ENCODE measurements at regions of chr3 and their contacts with region 1.

Region 1: DNA sequence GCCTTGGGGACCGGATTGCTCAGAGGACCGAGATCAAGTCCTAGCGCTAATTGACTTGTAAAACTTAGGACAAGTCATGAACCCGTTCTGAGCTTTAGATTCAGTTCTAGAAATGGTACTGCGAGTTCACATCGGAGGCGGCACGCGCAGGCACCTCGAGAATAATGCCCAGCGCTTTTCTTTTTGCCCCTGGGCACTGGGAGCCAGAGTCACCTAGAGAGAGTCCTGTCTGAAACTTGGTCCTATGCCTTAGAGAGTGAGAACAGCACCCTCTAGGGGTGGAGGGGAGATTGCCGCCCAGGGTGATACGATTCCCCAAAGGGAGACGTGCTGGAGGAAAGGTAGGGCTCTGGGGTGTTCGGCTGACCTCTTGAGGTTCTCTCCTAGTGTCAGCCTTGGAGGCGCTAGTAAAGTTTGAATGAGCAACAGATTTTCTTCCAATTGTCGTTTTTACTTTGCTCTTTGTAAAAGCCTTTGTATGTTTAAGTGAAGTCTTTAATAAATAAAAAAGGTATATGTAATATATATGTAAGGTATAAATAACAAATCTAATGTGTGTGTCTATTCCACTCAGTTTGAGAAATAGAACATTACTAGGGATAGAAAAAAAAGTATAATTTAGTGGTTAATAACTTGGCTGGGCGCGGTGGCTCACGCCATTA is 826 bp downstream of the EEF1AKMT4 start:
- DNase-seq: peak; percentile 92
- ATAC-seq: peak; percentile 65
- H3K4me3 ChIP-seq: peak overlapping the region; percentile 88 to 93 (median 91)
- H3K4me3 Mint-ChIP-seq: peak overlapping the region; percentile 87
- H3K27ac ChIP-seq: peak overlapping the region in 1 of 2 donors; percentile 58
- H3K27ac Mint-ChIP-seq: peak overlapping the region; percentile 78
- H3K4me1 ChIP-seq: peaks cover 5 to 17% of the 10 kb centered on the region in 2 donors
- H3K4me1 Mint-ChIP-seq: peaks cover 9% of the 10 kb centered on the region
- H3K27me3 ChIP-seq: no peaks in the 10 kb centered on the region
- H3K27me3 Mint-ChIP-seq: no peaks in the 10 kb centered on the region
- CTCF ChIP-seq: peak; percentile 94

Region 2: DNA sequence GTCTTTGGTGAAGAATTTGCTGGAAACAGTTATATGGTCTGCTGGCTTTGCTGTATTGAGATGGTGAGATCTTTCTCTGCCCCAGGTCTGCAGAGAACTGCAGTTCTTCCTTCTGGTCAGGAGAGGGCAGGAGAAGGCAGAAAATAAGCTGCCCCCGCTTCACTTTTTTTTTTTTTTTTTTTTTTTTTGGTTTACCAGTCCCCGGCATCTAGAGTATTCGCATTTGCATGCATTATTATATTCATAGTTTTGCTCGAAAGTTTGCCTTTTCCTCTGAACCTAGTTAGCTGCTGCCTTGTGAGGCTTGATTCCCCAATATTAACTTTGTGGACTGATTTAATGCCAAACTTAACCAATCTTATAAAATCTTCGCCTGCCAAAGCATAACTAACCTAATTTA is 355.0 kb before region 1 on chr3:
- CTCF ChIA-PET with region 1: interaction called, 10 read pairs
- POLR2A ChIA-PET with region 1: no interaction called
- intact Hi-C with region 1: loop called (anchors 1 kb)
- DNase-seq: peak; percentile 73
- ATAC-seq: peak; percentile 96
- H3K4me3 ChIP-seq: no peak overlapping the region
- H3K4me3 Mint-ChIP-seq: no peak overlapping the region
- H3K27ac ChIP-seq: no peak overlapping the region
- H3K27ac Mint-ChIP-seq: no peak overlapping the region
- H3K4me1 ChIP-seq: peaks cover 0 to 2% of the 10 kb centered on the region in 2 donors
- H3K4me1 Mint-ChIP-seq: no peaks in the 10 kb centered on the region
- H3K27me3 ChIP-seq: peaks cover 0 to 9% (median 0%) of the 10 kb centered on the region in 4 experiments
- H3K27me3 Mint-ChIP-seq: peaks cover 37% of the 10 kb centered on the region
- CTCF ChIP-seq: peak; percentile 86

Region 3: DNA sequence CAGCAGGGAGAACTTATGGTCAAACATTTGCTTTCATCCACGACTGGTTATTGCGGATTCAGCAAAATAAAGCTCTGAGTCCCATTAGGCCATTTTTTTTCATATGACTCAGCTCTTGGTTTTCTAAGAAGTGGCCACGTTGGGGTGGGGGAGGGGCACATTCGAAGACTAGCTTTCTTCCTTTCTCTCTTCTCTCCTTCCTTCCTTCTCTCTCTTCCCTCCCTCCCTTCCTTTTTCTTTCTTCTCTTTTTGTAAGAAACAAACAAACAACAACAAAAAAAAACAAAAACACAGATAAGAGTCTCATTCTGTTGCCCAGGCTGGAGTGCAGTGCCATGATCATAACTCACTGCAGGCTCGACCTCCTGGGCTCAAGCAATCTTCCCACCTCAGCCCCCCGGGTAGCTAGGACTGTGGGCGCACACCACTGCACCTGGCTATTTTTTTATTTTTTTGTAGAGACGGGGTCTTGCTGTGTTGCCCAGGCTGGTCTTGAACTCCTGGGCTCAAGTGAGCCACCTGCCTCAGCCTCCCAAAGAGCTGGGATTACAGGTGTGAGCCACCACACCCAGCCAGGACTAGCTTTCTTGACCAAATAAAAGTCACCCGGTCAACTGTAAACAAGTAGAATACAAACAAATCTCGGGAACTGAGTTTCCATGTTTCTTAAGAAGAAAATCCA is 274.2 kb before region 1 on chr3:
- CTCF ChIA-PET with region 1: no interaction called
- POLR2A ChIA-PET with region 1: no interaction called
- intact Hi-C with region 1: no loop called
- DNase-seq: no peak
- ATAC-seq: no peak
- H3K4me3 ChIP-seq: no peak overlapping the region
- H3K4me3 Mint-ChIP-seq: no peak overlapping the region
- H3K27ac ChIP-seq: no peak overlapping the region
- H3K27ac Mint-ChIP-seq: no peak overlapping the region
- H3K4me1 ChIP-seq: no peaks in the 10 kb centered on the region
- H3K4me1 Mint-ChIP-seq: no peaks in the 10 kb centered on the region
- H3K27me3 ChIP-seq: no peaks in the 10 kb centered on the region
- H3K27me3 Mint-ChIP-seq: no peaks in the 10 kb centered on the region
- CTCF ChIP-seq: no peak

Region 4: DNA sequence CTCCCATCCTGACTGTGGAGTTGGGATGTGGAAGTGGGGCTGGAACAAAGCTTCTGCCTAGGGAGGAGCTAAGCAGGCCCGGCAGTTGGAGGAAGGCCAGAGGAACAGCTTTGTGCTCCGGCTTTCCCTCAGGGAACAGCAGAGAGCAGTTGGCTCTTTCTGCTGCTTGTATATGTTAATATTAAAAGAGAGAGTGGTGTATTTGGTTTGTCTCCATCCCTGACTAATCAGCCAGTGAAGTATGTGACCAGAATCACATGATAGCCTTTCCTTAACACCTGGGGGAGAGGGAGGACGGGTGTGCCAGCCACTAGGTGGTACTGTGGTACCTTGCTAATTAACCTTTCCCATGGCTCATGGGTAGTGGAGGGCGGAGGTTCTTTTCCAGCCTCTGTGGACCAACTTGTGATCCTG is 105.2 kb before region 1 on chr3:
- CTCF ChIA-PET with region 1: interaction called, 10 read pairs
- POLR2A ChIA-PET with region 1: no interaction called
- intact Hi-C with region 1: loop called (anchors 1 kb)
- DNase-seq: peak; percentile 61
- ATAC-seq: peak; percentile 64
- H3K4me3 ChIP-seq: no peak overlapping the region
- H3K4me3 Mint-ChIP-seq: no peak overlapping the region
- H3K27ac ChIP-seq: peak overlapping the region in 1 of 2 donors; percentile 9
- H3K27ac Mint-ChIP-seq: peak overlapping the region; percentile 70
- H3K4me1 ChIP-seq: peaks cover 11 to 12% of the 10 kb centered on the region in 2 donors
- H3K4me1 Mint-ChIP-seq: peaks cover 11% of the 10 kb centered on the region
- H3K27me3 ChIP-seq: no peaks in the 10 kb centered on the region
- H3K27me3 Mint-ChIP-seq: no peaks in the 10 kb centered on the region
- CTCF ChIP-seq: peak; percentile 17

Region 5: GRCh38 chr3:184185461-184186308 is 64.6 kb before region 1 on chr3 and contains the start of gene ABCF3:
- CTCF ChIA-PET with region 1: interaction called, 4 read pairs
- POLR2A ChIA-PET with region 1: no interaction called
- intact Hi-C with region 1: loop called (anchors 1 kb)
- DNase-seq: peak; percentile 100
- ATAC-seq: peak; percentile 94
- H3K4me3 ChIP-seq: peak within 1 kb of the TSS; percentile 70 to 100 (median 97)
- H3K4me3 Mint-ChIP-seq: peak within 1 kb of the TSS; percentile 99
- H3K27ac ChIP-seq: peak within 1 kb of the TSS; percentile 48 to 68
- H3K27ac Mint-ChIP-seq: peak within 1 kb of the TSS; percentile 94
- H3K4me1 ChIP-seq: peaks cover 17 to 21% of the 10 kb centered on the region in 2 donors
- H3K4me1 Mint-ChIP-seq: peaks cover 33% of the 10 kb centered on the region
- H3K27me3 ChIP-seq: no peaks in the 10 kb centered on the region
- H3K27me3 Mint-ChIP-seq: no peaks in the 10 kb centered on the region
- CTCF ChIP-seq: no peak
- total RNA-seq, gene ABCF3: 115 and 131 TPM in 2 replicates

Region 6: GRCh38 chr3:184272269-184272668 is 22.0 kb after region 1 on chr3:
- CTCF ChIA-PET with region 1: no interaction called
- POLR2A ChIA-PET with region 1: no interaction called
- intact Hi-C with region 1: no loop called
- DNase-seq: no peak
- ATAC-seq: no peak
- H3K4me3 ChIP-seq: no peak overlapping the region
- H3K4me3 Mint-ChIP-seq: no peak overlapping the region
- H3K27ac ChIP-seq: no peak overlapping the region
- H3K27ac Mint-ChIP-seq: no peak overlapping the region
- H3K4me1 ChIP-seq: peaks cover 0 to 5% of the 10 kb centered on the region in 2 donors
- H3K4me1 Mint-ChIP-seq: peaks cover 4% of the 10 kb centered on the region
- H3K27me3 ChIP-seq: peaks cover 0 to 35% (median 17%) of the 10 kb centered on the region in 4 experiments
- H3K27me3 Mint-ChIP-seq: peaks cover 50% of the 10 kb centered on the region
- CTCF ChIP-seq: no peak

Region 7: DNA sequence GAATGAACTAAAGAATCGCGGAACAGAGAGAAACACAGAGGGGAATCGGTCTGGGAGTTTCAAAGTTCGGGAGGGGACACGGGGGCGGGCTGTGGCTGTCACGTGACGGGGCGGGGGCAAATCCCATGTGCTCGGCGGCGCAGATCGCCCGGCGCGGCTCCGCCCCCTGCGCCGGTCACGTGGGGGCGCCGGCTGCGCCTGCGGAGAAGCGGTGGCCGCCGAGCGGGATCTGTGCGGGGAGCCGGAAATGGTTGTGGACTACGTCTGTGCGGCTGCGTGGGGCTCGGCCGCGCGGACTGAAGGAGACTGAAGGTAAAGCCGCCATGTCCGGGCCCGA is 64.0 kb after region 1 on chr3 and contains the start of gene EIF4G1:
- CTCF ChIA-PET with region 1: no interaction called
- POLR2A ChIA-PET with region 1: interaction called, 3 read pairs
- intact Hi-C with region 1: loop called (anchors 1 kb)
- DNase-seq: peak; percentile 96
- ATAC-seq: peak; percentile 90
- H3K4me3 ChIP-seq: peak within 1 kb of the TSS; percentile 43 to 71 (median 61)
- H3K4me3 Mint-ChIP-seq: peak within 1 kb of the TSS; percentile 90
- H3K27ac ChIP-seq: peak within 1 kb of the TSS; percentile 73 to 89
- H3K27ac Mint-ChIP-seq: peak within 1 kb of the TSS; percentile 88
- H3K4me1 ChIP-seq: peaks cover 13 to 23% of the 10 kb centered on the region in 2 donors
- H3K4me1 Mint-ChIP-seq: peaks cover 31% of the 10 kb centered on the region
- H3K27me3 ChIP-seq: no peaks in the 10 kb centered on the region
- H3K27me3 Mint-ChIP-seq: no peaks in the 10 kb centered on the region
- CTCF ChIP-seq: no peak
- total RNA-seq, gene EIF4G1: 160 TPM in 2 replicates